ENCODE measurements at regions of chr4 and their contacts with region 1.

Region 1: DNA sequence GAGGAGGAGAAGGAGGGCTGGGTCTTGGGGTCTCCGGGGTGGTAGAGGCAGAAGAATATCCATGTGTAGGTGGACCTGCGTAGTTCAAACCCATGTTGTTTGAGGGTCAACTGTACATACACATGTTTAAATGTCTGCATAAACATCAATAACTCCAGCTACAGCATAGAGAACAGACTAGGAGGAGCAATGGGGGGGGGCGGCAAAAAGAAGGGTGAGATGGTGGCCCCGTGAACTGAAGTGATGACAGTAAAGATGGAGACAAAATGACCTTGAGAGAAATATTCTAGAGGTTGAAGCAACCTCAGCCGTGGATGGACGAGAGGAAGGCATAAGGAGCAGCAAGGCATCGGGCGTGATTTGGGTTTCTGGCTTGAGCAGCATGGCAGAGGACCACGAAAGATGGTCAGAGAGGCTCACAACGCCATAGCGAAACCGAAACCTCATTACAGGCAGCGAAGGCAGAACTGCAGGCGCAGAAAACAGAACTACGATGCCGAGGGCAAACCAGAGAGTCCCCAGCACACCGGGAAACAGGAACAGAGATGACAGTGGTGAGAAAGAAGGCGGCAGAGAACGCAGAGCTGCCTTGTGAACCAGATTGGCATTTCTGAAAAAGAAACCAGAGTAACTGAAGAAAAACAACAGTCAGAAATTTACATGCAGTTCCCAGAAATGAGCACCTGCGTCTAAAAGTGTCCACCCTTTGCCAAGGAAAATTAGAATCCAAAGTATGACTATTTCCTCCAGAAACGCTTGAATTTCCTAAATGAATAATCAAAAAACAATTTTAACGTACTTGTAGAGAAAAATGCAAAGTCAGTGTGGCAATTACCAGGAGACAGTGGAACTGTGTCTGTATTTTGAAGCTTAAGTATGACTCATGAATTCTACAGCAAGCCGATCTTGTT is 50.3 kb upstream of the ENPP6 start:
- DNase-seq: peak in 2 of 4 donors; percentile 41 to 65
- ATAC-seq: peak; percentile 38
- H3K4me3 ChIP-seq: no peak overlapping the region
- H3K27ac ChIP-seq: peak overlapping the region in 3 of 4 donors; percentile 4 to 72 (median 41)
- H3K4me1 ChIP-seq: no peaks in the 10 kb centered on the region
- H3K27me3 ChIP-seq: no peaks in the 10 kb centered on the region
- CTCF ChIP-seq: no peak
- POLR2A ChIP-seq: no peak

Region 2: DNA sequence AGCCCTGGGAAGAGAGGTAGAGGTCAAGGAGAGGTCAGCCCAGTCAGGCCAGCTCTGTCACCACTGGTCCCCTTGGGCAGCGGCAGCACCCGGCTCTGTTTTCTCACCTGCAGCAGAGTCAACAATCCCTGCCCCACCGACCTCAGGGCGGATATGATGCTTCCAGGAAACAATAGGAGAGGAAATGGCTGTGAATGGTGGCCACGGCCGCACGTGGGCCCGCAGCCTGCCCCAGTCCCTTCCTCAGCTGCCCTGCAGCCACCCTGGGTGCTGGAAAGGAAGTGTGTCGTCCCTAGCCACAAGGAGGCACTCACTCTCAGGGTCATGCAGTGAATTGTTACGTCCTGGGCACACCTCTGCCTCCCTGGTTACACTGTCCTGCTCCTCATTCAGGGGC is 42.2 kb after region 1 on chr4:
- intact Hi-C with region 1: no loop called
- DNase-seq: peak in 3 of 4 donors; percentile 36 to 43 (median 38)
- ATAC-seq: no peak
- H3K4me3 ChIP-seq: no peak overlapping the region
- H3K27ac ChIP-seq: peak overlapping the region in 1 of 4 donors; percentile 74
- H3K4me1 ChIP-seq: peaks cover 16% of the 10 kb centered on the region
- H3K27me3 ChIP-seq: no peaks in the 10 kb centered on the region
- CTCF ChIP-seq: peak in 4 of 7 experiments; percentile 9 to 35 (median 34)
- POLR2A ChIP-seq: no peak

Region 3: GRCh38 chr4:184329659-184330400 is 61.9 kb after region 1 on chr4:
- intact Hi-C with region 1: no loop called
- DNase-seq: peak in 1 of 4 donors; percentile 76
- ATAC-seq: no peak
- H3K4me3 ChIP-seq: no peak overlapping the region
- H3K27ac ChIP-seq: peak overlapping the region in 1 of 4 donors; percentile 80
- H3K4me1 ChIP-seq: peaks cover 36% of the 10 kb centered on the region
- H3K27me3 ChIP-seq: no peaks in the 10 kb centered on the region
- CTCF ChIP-seq: no peak
- POLR2A ChIP-seq: no peak

Region 4: GRCh38 chr4:184544788-184545409 is 277.0 kb after region 1 on chr4:
- intact Hi-C with region 1: loop called (anchors 5 kb)
- DNase-seq: no peak
- ATAC-seq: no peak
- H3K4me3 ChIP-seq: no peak overlapping the region
- H3K27ac ChIP-seq: no peak overlapping the region
- H3K4me1 ChIP-seq: no peaks in the 10 kb centered on the region
- H3K27me3 ChIP-seq: no peaks in the 10 kb centered on the region
- CTCF ChIP-seq: no peak
- POLR2A ChIP-seq: no peak